ENCODE measurements at regions of chr17 and their contacts with region 1.

Region 1: DNA sequence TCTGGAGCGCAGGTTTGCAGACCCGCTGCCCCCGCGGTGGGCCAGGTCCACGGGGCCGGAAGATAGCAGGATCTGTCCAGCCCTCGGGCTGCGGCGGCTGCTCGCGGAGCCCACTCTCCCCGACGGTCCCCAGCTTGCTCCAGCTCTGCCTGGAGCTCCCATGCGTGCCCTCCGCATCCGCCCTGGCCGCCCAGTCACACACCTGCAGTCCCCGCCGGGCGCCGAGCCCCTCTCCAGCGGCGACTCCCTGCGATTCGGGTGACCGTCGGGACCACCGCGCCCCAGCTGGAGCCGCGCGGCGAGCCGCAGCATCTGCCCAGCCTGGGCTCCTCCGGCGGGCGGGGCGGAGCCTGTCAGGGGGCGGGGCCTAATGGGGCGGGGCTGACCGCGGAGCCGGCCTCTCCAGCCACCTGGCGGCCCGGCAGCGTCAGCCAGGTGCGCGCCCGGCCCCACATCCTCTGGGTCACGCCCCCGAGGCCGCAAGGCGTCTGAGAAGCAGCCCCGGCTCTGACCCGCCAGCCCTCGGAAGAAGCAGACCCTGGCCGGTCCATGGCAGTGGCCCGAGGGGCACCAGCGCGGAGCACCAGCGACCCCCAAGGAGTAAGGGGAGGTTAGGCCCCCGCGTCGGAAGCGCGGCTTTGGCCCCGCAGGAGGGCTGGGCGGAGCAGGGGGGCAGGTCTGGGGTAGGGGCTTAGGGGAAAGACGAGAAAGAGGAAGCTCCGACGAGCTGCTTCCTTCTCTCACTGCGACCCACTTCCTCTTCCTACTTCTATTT is at the start of gene PIK3R5:
- DNase-seq: peak; percentile 68 to 91 (median 79)
- ATAC-seq: peak; percentile 77
- H3K4me3 ChIP-seq: peak within 1 kb of the TSS; percentile 97 to 99
- H3K4me3 Mint-ChIP-seq: peak within 1 kb of the TSS; percentile 96
- H3K27ac ChIP-seq: peak within 1 kb of the TSS; percentile 83 to 85
- H3K27ac Mint-ChIP-seq: peak within 1 kb of the TSS; percentile 97
- H3K4me1 ChIP-seq: peaks cover 39% of the 10 kb centered on the region
- H3K4me1 Mint-ChIP-seq: peaks cover 48% of the 10 kb centered on the region
- H3K27me3 ChIP-seq: no peaks in the 10 kb centered on the region
- H3K27me3 Mint-ChIP-seq: no peaks in the 10 kb centered on the region
- CTCF ChIP-seq: no peak
- total RNA-seq, gene PIK3R5: 154 to 155 TPM

Region 2: GRCh38 chr17:8925808-8926207 is 39.8 kb before region 1 on chr17:
- CTCF ChIA-PET with region 1: no interaction called
- POLR2A ChIA-PET with region 1: no interaction called
- intact Hi-C with region 1: loop called (anchors 5 kb)
- DNase-seq: peak in 2 of 9 experiments; percentile 67 to 78
- ATAC-seq: no peak
- H3K4me3 ChIP-seq: no peak overlapping the region
- H3K4me3 Mint-ChIP-seq: no peak overlapping the region
- H3K27ac ChIP-seq: peak overlapping the region in 1 of 2 experiments; percentile 58
- H3K27ac Mint-ChIP-seq: no peak overlapping the region
- H3K4me1 ChIP-seq: peaks cover 35% of the 10 kb centered on the region
- H3K4me1 Mint-ChIP-seq: peaks cover 31% of the 10 kb centered on the region
- H3K27me3 ChIP-seq: no peaks in the 10 kb centered on the region
- H3K27me3 Mint-ChIP-seq: no peaks in the 10 kb centered on the region
- CTCF ChIP-seq: no peak

Region 3: DNA sequence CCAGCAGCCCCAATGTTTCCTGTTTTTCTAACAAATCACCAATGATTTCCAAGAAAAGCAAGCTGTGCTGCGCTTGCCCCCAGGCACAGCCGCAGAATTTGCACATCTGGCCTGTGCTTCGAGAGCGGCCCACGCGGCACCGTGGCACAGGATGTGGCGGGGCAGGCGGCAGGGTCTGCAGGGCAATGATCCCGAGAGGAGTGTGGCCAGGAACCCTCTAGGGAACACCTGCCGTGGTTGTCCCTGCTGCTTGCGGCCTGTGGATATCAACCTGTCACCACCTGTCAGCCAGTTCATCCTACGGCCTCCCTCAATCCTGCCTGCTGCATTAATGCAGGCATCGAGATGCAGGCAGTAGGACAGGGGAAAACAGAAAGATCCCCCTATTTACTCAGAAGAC is 24.1 kb before region 1 on chr17:
- CTCF ChIA-PET with region 1: interaction called, 6 read pairs
- POLR2A ChIA-PET with region 1: interaction called, 27 read pairs
- intact Hi-C with region 1: loop called (anchors 1 kb)
- DNase-seq: peak in 8 of 9 experiments; percentile 43 to 87 (median 72)
- ATAC-seq: peak; percentile 41
- H3K4me3 ChIP-seq: peak overlapping the region; percentile 32 to 43
- H3K4me3 Mint-ChIP-seq: peak overlapping the region; percentile 63
- H3K27ac ChIP-seq: peak overlapping the region; percentile 64 to 76
- H3K27ac Mint-ChIP-seq: peak overlapping the region; percentile 97
- H3K4me1 ChIP-seq: peaks cover 79% of the 10 kb centered on the region
- H3K4me1 Mint-ChIP-seq: peaks cover 88% of the 10 kb centered on the region
- H3K27me3 ChIP-seq: no peaks in the 10 kb centered on the region
- H3K27me3 Mint-ChIP-seq: no peaks in the 10 kb centered on the region
- CTCF ChIP-seq: no peak

Region 4: GRCh38 chr17:8954339-8954738 is 11.2 kb before region 1 on chr17:
- CTCF ChIA-PET with region 1: interaction called, 10 read pairs
- POLR2A ChIA-PET with region 1: interaction called, 47 read pairs
- intact Hi-C with region 1: loop called (anchors 1 kb)
- DNase-seq: peak; percentile 67 to 96 (median 83)
- ATAC-seq: peak; percentile 92
- H3K4me3 ChIP-seq: peak overlapping the region in 1 of 2 experiments; percentile 4
- H3K4me3 Mint-ChIP-seq: peak overlapping the region; percentile 83
- H3K27ac ChIP-seq: peak overlapping the region; percentile 40 to 85
- H3K27ac Mint-ChIP-seq: peak overlapping the region; percentile 99
- H3K4me1 ChIP-seq: peaks cover 89% of the 10 kb centered on the region
- H3K4me1 Mint-ChIP-seq: peaks cover 97% of the 10 kb centered on the region
- H3K27me3 ChIP-seq: no peaks in the 10 kb centered on the region
- H3K27me3 Mint-ChIP-seq: no peaks in the 10 kb centered on the region
- CTCF ChIP-seq: no peak